A673 (cell line): ENCODE measurements at regions of chr14 and their contacts with region 1.

Region 1: GRCh38 chr14:23320774-23321571 is at the start of gene PABPN1:
- DNase-seq: peak; percentile 100
- H3K4me3 ChIP-seq: peak within 1 kb of the TSS; percentile 78
- H3K27ac ChIP-seq: peak within 1 kb of the TSS; percentile 95
- H3K4me1 ChIP-seq: peaks cover 13% of the 10 kb centered on the region
- H3K27me3 ChIP-seq: no peaks in the 10 kb centered on the region
- CTCF ChIP-seq: no peak
- total RNA-seq, gene PABPN1: 275 and 287 TPM in 2 replicates

Region 2: GRCh38 chr14:22375321-22375930 is 945.5 kb before region 1 on chr14:
- CTCF ChIA-PET with region 1: no interaction called
- POLR2A ChIA-PET with region 1: no interaction called
- intact Hi-C with region 1: no loop called
- DNase-seq: peak; percentile 78
- H3K4me3 ChIP-seq: no peak overlapping the region
- H3K27ac ChIP-seq: no peak overlapping the region
- H3K4me1 ChIP-seq: no peaks in the 10 kb centered on the region
- H3K27me3 ChIP-seq: no peaks in the 10 kb centered on the region
- CTCF ChIP-seq: peak; percentile 86

Region 3: GRCh38 chr14:22491683-22492621 is 829.0 kb before region 1 on chr14:
- CTCF ChIA-PET with region 1: no interaction called
- POLR2A ChIA-PET with region 1: no interaction called
- intact Hi-C with region 1: no loop called
- DNase-seq: no peak
- H3K4me3 ChIP-seq: no peak overlapping the region
- H3K27ac ChIP-seq: no peak overlapping the region
- H3K4me1 ChIP-seq: peaks cover 52% of the 10 kb centered on the region
- H3K27me3 ChIP-seq: no peaks in the 10 kb centered on the region
- CTCF ChIP-seq: no peak

Region 4: GRCh38 chr14:23366426-23366921 is 45.5 kb after region 1 on chr14:
- CTCF ChIA-PET with region 1: no interaction called
- POLR2A ChIA-PET with region 1: no interaction called
- intact Hi-C with region 1: loop called (anchors 5 kb)
- DNase-seq: peak; percentile 96
- H3K4me3 ChIP-seq: peak overlapping the region; percentile 95
- H3K27ac ChIP-seq: peak overlapping the region; percentile 98
- H3K4me1 ChIP-seq: peaks cover 24% of the 10 kb centered on the region
- H3K27me3 ChIP-seq: no peaks in the 10 kb centered on the region
- CTCF ChIP-seq: no peak

Region 5: GRCh38 chr14:23469127-23469905 is 148.3 kb after region 1 on chr14 and contains the start of gene NGDN:
- CTCF ChIA-PET with region 1: no interaction called
- POLR2A ChIA-PET with region 1: no interaction called
- intact Hi-C with region 1: loop called (anchors 5 kb)
- DNase-seq: peak; percentile 100
- H3K4me3 ChIP-seq: peak within 1 kb of the TSS; percentile 79
- H3K27ac ChIP-seq: peak within 1 kb of the TSS; percentile 80
- H3K4me1 ChIP-seq: peaks cover 5% of the 10 kb centered on the region
- H3K27me3 ChIP-seq: no peaks in the 10 kb centered on the region
- CTCF ChIP-seq: peak; percentile 87
- total RNA-seq, gene NGDN: 59.9 and 71.2 TPM in 2 replicates